ENCODE measurements at regions of chr7 and their contacts with region 1.

Region 1: DNA sequence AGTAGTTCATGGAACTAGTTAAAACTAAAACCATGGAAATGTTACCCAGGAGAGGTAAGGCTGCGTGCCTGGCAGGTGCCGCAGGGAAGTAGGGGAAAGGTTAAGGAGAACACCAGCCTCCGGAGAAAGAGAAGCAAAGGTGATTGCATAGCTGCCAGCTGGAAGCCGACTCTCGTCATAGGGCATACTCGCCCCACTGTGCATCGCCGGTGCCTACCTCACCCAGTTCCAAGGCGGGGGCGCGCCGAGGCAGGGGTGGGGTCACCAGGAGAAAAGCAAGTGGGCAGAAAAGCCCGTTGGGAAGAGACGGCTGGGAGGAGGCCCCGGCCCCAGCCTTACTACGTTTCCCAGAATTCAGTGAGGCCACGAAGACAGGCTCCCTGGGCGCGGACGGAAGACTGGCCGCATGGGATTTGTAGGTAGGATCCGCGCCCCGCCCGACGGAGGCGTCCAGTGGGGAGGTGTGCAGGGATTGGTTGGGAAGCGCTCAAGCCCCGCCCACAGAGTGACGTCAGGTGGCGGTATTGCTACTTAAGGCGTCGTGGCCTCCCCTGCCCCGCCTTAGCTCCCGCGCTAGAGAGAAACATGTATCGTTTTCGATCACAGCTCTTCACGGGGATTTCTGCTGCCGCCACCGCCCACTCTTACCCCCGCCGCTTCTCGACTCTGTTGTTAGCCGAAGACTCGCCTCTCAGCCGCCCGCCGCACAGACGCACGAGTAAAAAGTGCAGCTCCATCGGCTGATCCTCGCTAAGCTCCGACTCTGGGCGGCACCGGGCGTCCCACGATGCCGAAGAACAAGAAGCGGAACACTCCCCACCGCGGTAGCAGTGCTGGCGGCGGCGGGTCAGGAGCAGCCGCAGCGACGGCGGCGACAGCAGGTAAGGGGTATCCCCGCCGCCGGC is at the start of gene IFRD1:
- DNase-seq: peak; percentile 100
- H3K4me3 Mint-ChIP-seq: peak within 1 kb of the TSS; percentile 99
- H3K27ac Mint-ChIP-seq: peak within 1 kb of the TSS; percentile 99
- H3K4me1 Mint-ChIP-seq: peaks cover 46% of the 10 kb centered on the region
- H3K27me3 Mint-ChIP-seq: no peaks in the 10 kb centered on the region
- total RNA-seq, gene IFRD1: 70.7 and 72.8 TPM in 2 replicates

Region 2: GRCh38 chr7:112386619-112387018 is 63.5 kb before region 1 on chr7:
- intact Hi-C with region 1: loop called (anchors 1 kb)
- DNase-seq: no peak
- H3K4me3 Mint-ChIP-seq: no peak overlapping the region
- H3K27ac Mint-ChIP-seq: no peak overlapping the region
- H3K4me1 Mint-ChIP-seq: peaks cover 3% of the 10 kb centered on the region
- H3K27me3 Mint-ChIP-seq: peaks cover 25% of the 10 kb centered on the region

Region 3: DNA sequence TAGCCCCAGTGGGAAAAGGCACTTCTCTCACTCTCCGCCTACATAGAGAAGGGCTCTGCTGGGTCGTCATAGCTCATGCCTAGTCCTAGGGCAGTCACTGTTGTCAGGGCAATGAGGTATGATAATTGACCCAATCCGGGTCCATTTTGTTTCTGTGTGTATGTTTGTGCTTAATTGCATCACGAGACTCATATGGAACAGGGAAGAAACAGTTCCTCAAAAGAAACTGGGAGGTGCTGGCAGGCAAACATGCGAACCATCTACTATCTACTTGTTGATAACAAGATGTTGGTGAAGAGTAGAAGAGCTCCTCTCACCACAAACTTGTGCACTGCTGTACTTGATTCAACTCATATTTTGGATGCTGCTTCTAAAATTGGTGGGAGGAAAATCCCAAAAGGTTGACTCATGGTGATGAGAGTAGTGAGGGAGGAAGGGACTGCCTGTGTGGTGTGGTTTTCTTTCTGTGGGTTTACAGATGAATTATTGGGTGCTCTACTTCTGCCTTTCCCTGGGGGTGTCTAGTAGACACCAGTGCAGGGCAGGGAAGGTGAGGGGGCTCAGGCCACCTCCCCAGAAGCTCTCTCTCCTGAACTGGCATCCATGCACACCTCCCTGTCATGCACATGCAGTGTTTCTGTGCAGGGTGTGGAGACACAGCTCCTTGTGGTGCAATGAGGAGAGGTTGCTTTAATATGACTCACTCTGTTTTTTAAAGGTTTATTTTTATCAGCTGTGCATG is 60.0 kb after region 1 on chr7:
- intact Hi-C with region 1: loop called (anchors 1 kb)
- DNase-seq: peak; percentile 59
- H3K4me3 Mint-ChIP-seq: peak overlapping the region; percentile 49
- H3K27ac Mint-ChIP-seq: peak overlapping the region; percentile 87
- H3K4me1 Mint-ChIP-seq: peaks cover 20% of the 10 kb centered on the region
- H3K27me3 Mint-ChIP-seq: peaks cover 4% of the 10 kb centered on the region

Region 4: GRCh38 chr7:112939574-112940314 is 489.6 kb after region 1 on chr7:
- intact Hi-C with region 1: loop called (anchors 1 kb)
- DNase-seq: peak; percentile 100
- H3K4me3 Mint-ChIP-seq: peak overlapping the region; percentile 95
- H3K27ac Mint-ChIP-seq: peak overlapping the region; percentile 97
- H3K4me1 Mint-ChIP-seq: peaks cover 26% of the 10 kb centered on the region
- H3K27me3 Mint-ChIP-seq: peaks cover 5% of the 10 kb centered on the region

Region 5: GRCh38 chr7:113118074-113118959 is 668.2 kb after region 1 on chr7 and contains the start of gene SMIM30:
- intact Hi-C with region 1: loop called (anchors 1 kb)
- DNase-seq: peak; percentile 96
- H3K4me3 Mint-ChIP-seq: peak within 1 kb of the TSS; percentile 93
- H3K27ac Mint-ChIP-seq: peak within 1 kb of the TSS; percentile 91
- H3K4me1 Mint-ChIP-seq: peaks cover 21% of the 10 kb centered on the region
- H3K27me3 Mint-ChIP-seq: no peaks in the 10 kb centered on the region
- total RNA-seq, gene SMIM30: 35.0 and 37.7 TPM in 2 replicates

Region 6: GRCh38 chr7:113504142-113504541 is 1054.0 kb after region 1 on chr7:
- intact Hi-C with region 1: no loop called
- DNase-seq: no peak
- H3K4me3 Mint-ChIP-seq: no peak overlapping the region
- H3K27ac Mint-ChIP-seq: no peak overlapping the region
- H3K4me1 Mint-ChIP-seq: no peaks in the 10 kb centered on the region
- H3K27me3 Mint-ChIP-seq: no peaks in the 10 kb centered on the region